Cardiac septum (tissue), 1 donor: ENCODE measurements at regions of chr1 and their contacts with region 1.

Region 1: DNA sequence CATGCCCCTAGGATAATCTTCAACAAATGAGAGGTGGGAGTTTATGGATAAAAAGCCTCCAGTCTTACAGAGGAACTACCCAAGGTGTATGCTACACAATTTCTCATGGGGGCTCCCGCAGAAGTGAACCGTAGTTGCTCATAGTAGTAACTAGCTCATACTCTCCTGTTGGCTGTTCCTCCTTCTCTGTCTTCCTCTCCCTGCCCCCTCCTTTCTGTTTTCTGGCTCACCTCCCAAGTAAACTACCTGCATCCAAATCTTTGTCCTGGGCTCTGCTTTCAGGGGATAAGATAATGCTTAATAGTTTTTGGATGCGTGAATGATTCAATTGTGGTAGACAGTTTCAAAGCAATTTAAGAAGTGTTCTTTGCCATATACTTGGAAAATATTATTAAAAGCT is 90.1 kb upstream of the ROR1 start:
- DNase-seq: no peak

Region 2: DNA sequence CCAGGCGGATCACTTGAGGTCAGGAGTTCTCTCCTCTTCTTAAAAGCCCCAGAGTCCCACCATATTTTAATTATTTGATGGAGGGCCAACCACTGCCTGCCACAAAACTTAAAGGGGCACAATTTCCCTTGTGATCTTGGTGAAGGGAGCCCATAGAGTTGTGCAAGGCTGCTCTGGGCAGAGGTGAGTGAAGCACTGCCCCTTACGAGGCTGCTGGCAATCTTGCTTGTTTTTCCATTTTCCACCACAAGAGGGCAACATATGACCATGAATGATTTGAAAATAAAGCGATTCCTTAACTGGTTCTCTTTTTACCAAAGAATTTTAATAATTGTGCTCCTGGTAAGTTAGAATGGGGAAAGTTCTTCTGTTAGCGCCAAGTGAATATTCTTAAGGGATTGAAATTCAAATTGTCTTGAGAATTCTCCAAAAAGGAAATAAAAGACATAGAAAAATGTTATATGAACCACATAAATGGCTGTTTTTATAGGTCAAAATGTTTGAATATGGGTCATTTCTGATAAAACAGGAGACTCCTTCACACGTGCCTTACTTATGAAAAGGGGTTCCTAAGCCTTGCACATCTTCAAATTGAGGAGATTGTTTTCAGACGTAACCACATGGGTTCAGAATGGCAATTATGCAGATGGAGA is 67.9 kb before region 1 on chr1:
- intact Hi-C with region 1: loop called (anchors 5 kb)
- DNase-seq: no peak

Region 3: DNA sequence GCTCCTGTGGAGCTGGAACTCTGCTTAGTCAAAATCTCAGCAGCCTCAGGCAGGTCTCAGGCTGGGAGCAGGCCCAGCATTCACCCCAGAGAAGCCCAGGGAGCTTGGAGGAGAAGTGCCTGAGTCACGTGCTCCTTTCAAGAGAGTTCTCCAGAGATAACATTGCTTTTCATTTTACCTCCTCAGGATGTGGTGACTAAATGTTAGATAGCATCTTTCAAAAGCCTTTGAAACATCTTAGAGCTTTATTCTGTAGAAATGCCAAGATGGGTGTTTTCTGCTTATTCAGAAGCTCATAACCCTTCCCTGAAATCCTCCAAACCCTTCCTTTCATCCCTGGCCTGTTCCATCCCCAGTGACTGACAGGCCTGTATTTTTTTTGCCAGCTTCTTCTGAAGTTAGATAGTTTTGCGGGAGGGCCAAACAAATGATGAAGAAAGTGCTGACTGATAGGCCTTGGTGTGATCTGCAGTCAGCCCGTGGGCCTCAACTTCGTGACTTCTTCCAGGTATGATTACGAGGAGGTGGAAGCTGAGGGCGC is 32.5 kb before region 1 on chr1:
- intact Hi-C with region 1: no loop called
- DNase-seq: no peak

Region 4: DNA sequence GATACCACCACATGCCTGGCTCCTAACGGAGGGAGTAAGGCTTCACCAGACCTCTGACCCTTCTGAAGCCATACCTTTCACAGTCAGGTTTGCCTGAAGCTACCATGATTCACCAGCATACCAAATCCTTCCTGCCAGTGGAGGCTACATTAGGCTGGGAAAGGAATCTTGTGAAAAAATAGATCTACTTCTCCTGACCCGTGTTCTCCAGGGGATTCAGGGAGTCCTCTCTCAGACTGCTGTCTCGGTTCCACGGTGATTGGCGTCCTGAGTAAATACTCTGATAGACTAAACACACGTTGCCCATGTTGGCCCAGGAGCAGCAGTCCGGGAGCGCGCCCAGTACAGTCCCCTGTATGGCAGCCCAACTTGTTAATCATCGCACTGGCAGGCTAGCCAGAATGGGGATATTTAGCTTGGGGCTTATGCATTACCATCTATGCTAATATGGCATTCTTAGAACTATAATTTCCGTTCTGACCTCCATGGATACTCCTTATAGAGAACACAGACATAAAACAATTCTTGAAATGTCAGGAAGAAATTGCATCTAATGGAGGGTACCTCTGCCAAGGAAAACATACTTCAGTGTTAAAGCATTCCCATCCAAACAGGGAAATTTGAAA is 263.2 kb after region 1 on chr1:
- intact Hi-C with region 1: no loop called
- DNase-seq: no peak